Vagina (tissue), 2 donors: ENCODE measurements at regions of chr11 and their contacts with region 1.

Region 1: GRCh38 chr11:128497061-128497775 is 90.1 kb downstream of the ETS1 start:
- DNase-seq: no peak
- H3K4me3 ChIP-seq: peak overlapping the region in 1 of 2 donors; percentile 20
- H3K27ac ChIP-seq: peak overlapping the region; percentile 69
- H3K4me1 ChIP-seq: peaks cover 89% of the 10 kb centered on the region
- H3K27me3 ChIP-seq: no peaks in the 10 kb centered on the region
- CTCF ChIP-seq: no peak
- POLR2A ChIP-seq: no peak

Region 2: GRCh38 chr11:127454856-127455255 is 1042.4 kb before region 1 on chr11:
- intact Hi-C with region 1: no loop called
- DNase-seq: no peak
- H3K4me3 ChIP-seq: no peak overlapping the region
- H3K27ac ChIP-seq: no peak overlapping the region
- H3K4me1 ChIP-seq: no peaks in the 10 kb centered on the region
- H3K27me3 ChIP-seq: no peaks in the 10 kb centered on the region
- CTCF ChIP-seq: no peak
- POLR2A ChIP-seq: no peak

Region 3: GRCh38 chr11:128482512-128483191 is 14.6 kb before region 1 on chr11:
- intact Hi-C with region 1: loop called (anchors 1 kb)
- DNase-seq: no peak
- H3K4me3 ChIP-seq: no peak overlapping the region
- H3K27ac ChIP-seq: peak overlapping the region; percentile 83
- H3K4me1 ChIP-seq: peaks cover 55% of the 10 kb centered on the region
- H3K27me3 ChIP-seq: no peaks in the 10 kb centered on the region
- CTCF ChIP-seq: no peak
- POLR2A ChIP-seq: no peak